ENCODE measurements at regions of chr2 and their contacts with region 1.

Region 1: GRCh38 chr2:190139371-190139770 is 76.8 kb upstream of the MSTN start:
- DNase-seq: no peak
- ATAC-seq: no peak
- H3K4me3 ChIP-seq: no peak overlapping the region
- H3K4me3 Mint-ChIP-seq: no peak overlapping the region
- H3K27ac ChIP-seq: no peak overlapping the region
- H3K27ac Mint-ChIP-seq: no peak overlapping the region
- H3K4me1 ChIP-seq: no peaks in the 10 kb centered on the region
- H3K4me1 Mint-ChIP-seq: no peaks in the 10 kb centered on the region
- H3K27me3 ChIP-seq: no peaks in the 10 kb centered on the region
- H3K27me3 Mint-ChIP-seq: no peaks in the 10 kb centered on the region
- CTCF ChIP-seq: no peak

Region 2: DNA sequence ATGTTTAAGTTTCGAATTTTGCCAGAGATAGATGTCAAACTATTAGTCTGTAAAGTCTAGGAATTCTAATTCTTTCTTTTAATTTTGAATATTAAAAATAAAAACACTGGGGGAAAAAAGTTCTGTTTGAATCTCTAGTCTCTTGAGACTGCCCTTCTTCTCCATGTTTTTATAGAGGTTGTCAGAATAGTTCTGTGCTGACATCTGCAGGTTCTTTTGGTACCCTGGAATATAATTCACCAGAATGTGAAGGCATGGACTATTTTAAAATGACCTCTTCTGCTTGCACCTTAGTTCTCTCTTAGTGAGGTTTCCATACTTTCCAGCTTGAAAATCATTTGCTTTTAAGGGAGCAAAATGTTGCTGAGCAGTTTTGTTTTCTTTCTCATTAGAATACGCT is 44.2 kb after region 1 on chr2:
- intact Hi-C with region 1: loop called (anchors 1 kb)
- DNase-seq: no peak
- ATAC-seq: no peak
- H3K4me3 ChIP-seq: no peak overlapping the region
- H3K4me3 Mint-ChIP-seq: no peak overlapping the region
- H3K27ac ChIP-seq: no peak overlapping the region
- H3K27ac Mint-ChIP-seq: no peak overlapping the region
- H3K4me1 ChIP-seq: peaks cover 9% of the 10 kb centered on the region
- H3K4me1 Mint-ChIP-seq: peaks cover 11% of the 10 kb centered on the region in 2 donors
- H3K27me3 ChIP-seq: peaks cover 5% of the 10 kb centered on the region
- H3K27me3 Mint-ChIP-seq: peaks cover 0 to 14% of the 10 kb centered on the region in 2 donors
- CTCF ChIP-seq: no peak

Region 3: GRCh38 chr2:190379249-190379964 is 240.0 kb after region 1 on chr2:
- intact Hi-C with region 1: no loop called
- DNase-seq: no peak
- ATAC-seq: no peak
- H3K4me3 ChIP-seq: no peak overlapping the region
- H3K4me3 Mint-ChIP-seq: no peak overlapping the region
- H3K27ac ChIP-seq: no peak overlapping the region
- H3K27ac Mint-ChIP-seq: no peak overlapping the region
- H3K4me1 ChIP-seq: no peaks in the 10 kb centered on the region
- H3K4me1 Mint-ChIP-seq: peaks cover 0 to 5% of the 10 kb centered on the region in 2 donors
- H3K27me3 ChIP-seq: no peaks in the 10 kb centered on the region
- H3K27me3 Mint-ChIP-seq: no peaks in the 10 kb centered on the region
- CTCF ChIP-seq: no peak

Measured in natural killer cell (primary cell).